ENCODE measurements at regions of chr2 and their contacts with region 1.

Region 1: GRCh38 chr2:74576863-74577229 is 22.3 kb downstream of the DOK1 start:
- DNase-seq: peak; percentile 90
- ATAC-seq: peak; percentile 47
- H3K4me3 ChIP-seq: no peak overlapping the region
- H3K27ac ChIP-seq: peak overlapping the region; percentile 84
- H3K4me1 ChIP-seq: peaks cover 21% of the 10 kb centered on the region
- H3K27me3 ChIP-seq: no peaks in the 10 kb centered on the region
- CTCF ChIP-seq: peak; percentile 36
- POLR2A ChIP-seq: no peak
- RAD21 ChIP-seq: peak; percentile 30

Region 2: GRCh38 chr2:74529357-74530238 is 47.2 kb before region 1 on chr2 and contains the starts of genes AUP1 and HTRA2:
- CTCF ChIA-PET with region 1: no interaction called
- POLR2A ChIA-PET with region 1: no interaction called
- dilution Hi-C with region 1: no loop called
- in situ Hi-C with region 1: no loop called
- intact Hi-C with region 1: loop called (anchors 2 kb)
- DNase-seq: peak; percentile 99
- ATAC-seq: peak; percentile 93
- H3K4me3 ChIP-seq: peak within 1 kb of the TSS; percentile 93
- H3K27ac ChIP-seq: peak within 1 kb of the TSS; percentile 85
- H3K4me1 ChIP-seq: peaks cover 12% of the 10 kb centered on the region
- H3K27me3 ChIP-seq: no peaks in the 10 kb centered on the region
- CTCF ChIP-seq: no peak
- POLR2A ChIP-seq: peak; percentile 93
- RAD21 ChIP-seq: peak; percentile 6
- total RNA-seq, gene AUP1: 45.8 and 47.5 TPM in 2 replicates
- total RNA-seq, gene HTRA2: 28.1 and 34.2 TPM in 2 replicates

Region 3: GRCh38 chr2:74646201-74646600 is 69.4 kb after region 1 on chr2:
- CTCF ChIA-PET with region 1: no interaction called
- POLR2A ChIA-PET with region 1: interaction called, 11 read pairs
- dilution Hi-C with region 1: no loop called
- in situ Hi-C with region 1: no loop called
- intact Hi-C with region 1: no loop called
- DNase-seq: no peak
- ATAC-seq: no peak
- H3K4me3 ChIP-seq: no peak overlapping the region
- H3K27ac ChIP-seq: no peak overlapping the region
- H3K4me1 ChIP-seq: no peaks in the 10 kb centered on the region
- H3K27me3 ChIP-seq: peaks cover 28% of the 10 kb centered on the region
- CTCF ChIP-seq: no peak
- POLR2A ChIP-seq: no peak
- RAD21 ChIP-seq: no peak

Measured in IMR-90 (cell line).